Heart right ventricle (tissue), 16 donors: ENCODE measurements at regions of chr9 and their contacts with region 1.

Region 1: DNA sequence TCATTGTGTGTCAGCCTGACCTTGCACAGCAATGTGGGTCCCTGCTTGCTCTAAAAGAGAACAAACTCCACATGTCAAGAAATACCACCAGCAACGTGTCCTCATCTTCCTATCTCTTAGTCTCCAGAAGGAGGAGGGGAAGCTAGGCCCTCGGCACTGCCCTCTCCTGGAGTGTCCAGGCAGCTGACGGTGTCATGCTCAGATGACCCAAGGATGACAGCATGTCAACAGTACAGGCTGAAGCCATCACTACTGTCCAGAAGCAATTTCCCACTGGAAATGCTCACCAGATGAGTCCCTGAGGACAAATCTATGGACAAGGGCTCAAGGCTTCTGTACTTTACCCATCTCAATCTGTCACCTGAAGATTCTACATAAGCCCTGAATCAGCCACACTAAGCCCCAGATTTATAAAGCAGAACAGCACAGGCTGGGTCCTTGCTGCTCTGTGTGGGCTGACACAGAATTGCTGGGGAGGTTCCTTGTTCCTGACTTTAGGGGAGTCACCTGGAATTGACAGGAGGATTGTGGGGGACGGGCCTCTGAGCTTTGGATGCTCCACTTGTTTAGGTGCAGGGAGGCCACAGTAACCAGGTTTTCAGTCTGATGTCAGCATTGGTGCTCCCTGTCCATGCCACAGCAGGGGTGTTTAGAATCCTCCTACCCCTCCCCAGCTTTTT is 210.2 kb downstream of the DAB2IP start:
- DNase-seq: peak; percentile 49 to 50
- ATAC-seq: peak in 7 of 8 donors; percentile 77 to 93 (median 79)
- H3K4me3 ChIP-seq: no peak overlapping the region
- H3K27ac ChIP-seq: no peak overlapping the region
- H3K4me1 ChIP-seq: peaks cover 0 to 20% (median 13%) of the 10 kb centered on the region in 9 donors
- H3K27me3 ChIP-seq: no peaks in the 10 kb centered on the region
- CTCF ChIP-seq: peak; percentile 27 to 74 (median 64)

Region 2: GRCh38 chr9:121744002-121744686 is 117.5 kb before region 1 on chr9:
- intact Hi-C with region 1: loop called in 2 of 10 experiments (anchors 1 to 5 kb)
- DNase-seq: peak; percentile 67 to 75
- ATAC-seq: peak; percentile 43 to 83 (median 73)
- H3K4me3 ChIP-seq: peak overlapping the region; percentile 23 to 64 (median 52)
- H3K27ac ChIP-seq: peak overlapping the region; percentile 89 to 98 (median 94)
- H3K4me1 ChIP-seq: peaks cover 57 to 100% (median 90%) of the 10 kb centered on the region in 9 donors
- H3K27me3 ChIP-seq: no peaks in the 10 kb centered on the region
- CTCF ChIP-seq: peak; percentile 29 to 77 (median 54)

Region 3: GRCh38 chr9:121750715-121751623 is 110.7 kb before region 1 on chr9:
- intact Hi-C with region 1: loop called in 1 of 10 experiments (anchors 5 kb)
- DNase-seq: no peak
- ATAC-seq: no peak
- H3K4me3 ChIP-seq: no peak overlapping the region
- H3K27ac ChIP-seq: peak overlapping the region in 9 of 10 donors; percentile 13 to 98 (median 70)
- H3K4me1 ChIP-seq: peaks cover 62 to 100% (median 97%) of the 10 kb centered on the region in 9 donors
- H3K27me3 ChIP-seq: no peaks in the 10 kb centered on the region
- CTCF ChIP-seq: no peak